ENCODE measurements at regions of chr2 and their contacts with region 1.

Region 1: GRCh38 chr2:108215794-108216211 is 24.0 kb upstream of the SULT1C3 start:
- DNase-seq: peak; percentile 46 to 71
- ATAC-seq: peak; percentile 95 to 99
- H3K4me3 ChIP-seq: no peak overlapping the region
- H3K27ac ChIP-seq: peak overlapping the region; percentile 79 to 86
- H3K4me1 ChIP-seq: peaks cover 11% of the 10 kb centered on the region
- CTCF ChIP-seq: peak; percentile 79
- EP300 ChIP-seq: no peak
- POLR2A ChIP-seq: no peak
- RAD21 ChIP-seq: peak; percentile 92 to 95

Region 2: DNA sequence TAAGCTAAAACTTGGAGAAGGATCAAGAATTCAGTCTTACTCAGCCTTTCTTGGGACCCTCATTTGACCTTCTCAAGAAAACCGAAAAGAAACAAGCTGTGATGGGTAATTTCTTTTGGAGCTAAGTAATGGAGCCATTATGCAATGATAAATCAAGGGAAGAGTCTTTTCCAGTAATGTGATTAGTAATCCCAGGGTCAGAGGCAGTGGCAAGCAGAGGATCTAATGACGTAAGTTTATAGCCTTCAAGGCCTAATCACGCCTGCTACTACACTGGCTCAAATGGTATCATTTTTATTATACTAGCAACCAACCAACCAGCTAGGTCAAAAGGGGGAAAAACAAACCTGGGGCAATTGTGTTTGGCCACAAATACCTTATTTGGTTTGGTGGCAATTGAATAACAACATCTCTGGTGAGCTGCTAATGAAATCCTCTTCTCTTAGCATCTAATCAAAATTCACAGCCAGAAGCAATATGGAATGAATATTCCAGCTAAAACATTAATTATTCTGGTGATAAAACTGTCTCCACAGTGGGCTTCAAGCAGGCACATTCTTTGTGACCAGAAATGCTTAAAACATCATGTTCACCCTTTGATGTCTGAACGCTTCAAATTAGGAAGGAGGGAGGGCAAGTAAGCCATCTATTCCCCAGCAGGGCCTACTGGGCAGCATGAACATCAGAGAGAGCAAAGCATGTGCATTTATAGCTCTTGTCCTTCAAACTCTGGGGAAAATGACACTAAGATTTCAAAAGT is 90.9 kb before region 1 on chr2:
- CTCF ChIA-PET with region 1: no interaction called
- POLR2A ChIA-PET with region 1: no interaction called
- DNase-seq: no peak
- ATAC-seq: no peak
- H3K4me3 ChIP-seq: no peak overlapping the region
- H3K27ac ChIP-seq: no peak overlapping the region
- H3K4me1 ChIP-seq: no peaks in the 10 kb centered on the region
- CTCF ChIP-seq: no peak
- EP300 ChIP-seq: no peak
- POLR2A ChIP-seq: no peak
- RAD21 ChIP-seq: no peak

Region 3: GRCh38 chr2:108492364-108492763 is 276.6 kb after region 1 on chr2:
- CTCF ChIA-PET with region 1: interaction called, 4 read pairs
- POLR2A ChIA-PET with region 1: interaction called, 10 read pairs
- DNase-seq: peak; percentile 66 to 88
- ATAC-seq: peak; percentile 99
- H3K4me3 ChIP-seq: no peak overlapping the region
- H3K27ac ChIP-seq: peak overlapping the region; percentile 73 to 77
- H3K4me1 ChIP-seq: peaks cover 27% of the 10 kb centered on the region
- CTCF ChIP-seq: no peak; the same call in 2 of the 3 replicates
- EP300 ChIP-seq: peak; percentile 25 to 35; a peak in 1 of 5 replicates
- POLR2A ChIP-seq: no peak
- RAD21 ChIP-seq: peak; percentile 33 to 48; a peak in 4 of 5 replicates